Mammary epithelial cell (primary cell): ENCODE measurements at regions of chr19 and their contacts with region 1.

Region 1: DNA sequence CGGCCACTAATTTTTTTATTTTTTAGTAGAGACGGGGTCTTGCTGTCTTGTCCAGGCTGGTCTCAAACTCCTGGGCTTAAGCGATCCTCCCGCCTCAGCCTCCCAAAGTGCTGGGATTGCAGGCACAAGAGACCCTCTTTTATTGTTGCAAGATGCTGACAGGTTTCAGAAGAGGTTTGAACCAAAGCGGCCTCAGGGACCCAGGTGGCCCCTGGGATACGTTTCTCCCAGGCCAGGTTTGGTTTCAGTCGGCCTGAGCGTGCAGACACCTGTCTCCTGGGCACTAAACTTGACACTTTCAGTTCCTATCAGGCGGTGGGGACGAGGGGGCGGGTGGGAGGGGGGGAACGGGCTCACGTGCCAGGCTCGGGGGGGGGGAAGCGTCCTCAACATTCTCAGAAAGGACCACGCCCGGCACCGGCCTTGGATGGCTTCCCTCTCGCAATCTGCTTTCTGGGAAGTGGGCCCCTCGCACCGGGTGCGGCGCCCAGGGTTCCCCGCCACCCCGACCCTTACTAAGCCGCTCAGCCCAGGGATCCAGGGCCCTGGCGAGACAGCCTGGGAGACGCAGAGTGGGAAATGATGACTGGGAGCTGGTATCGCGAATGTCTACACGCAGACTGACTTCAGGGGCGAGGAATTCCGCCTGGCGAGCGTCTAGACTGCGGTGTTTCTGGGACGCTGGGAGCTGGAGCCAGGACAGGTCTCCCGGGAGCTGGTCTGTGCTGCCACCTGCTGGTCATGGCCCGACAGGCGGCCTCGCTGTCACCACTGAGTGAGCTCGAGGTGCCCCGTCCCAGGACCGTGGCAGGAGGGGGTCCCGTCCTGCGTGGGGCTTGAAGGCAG is 91.6 kb downstream of the GNG7 start:
- DNase-seq: peak; percentile 72
- H3K4me3 ChIP-seq: peak overlapping the region in 2 of 3 experiments; percentile 35 to 41
- H3K27ac ChIP-seq: no peak overlapping the region
- H3K4me1 ChIP-seq: peaks cover 6% of the 10 kb centered on the region
- H3K27me3 ChIP-seq: no peaks in the 10 kb centered on the region
- CTCF ChIP-seq: peak; percentile 84 to 99

Region 2: DNA sequence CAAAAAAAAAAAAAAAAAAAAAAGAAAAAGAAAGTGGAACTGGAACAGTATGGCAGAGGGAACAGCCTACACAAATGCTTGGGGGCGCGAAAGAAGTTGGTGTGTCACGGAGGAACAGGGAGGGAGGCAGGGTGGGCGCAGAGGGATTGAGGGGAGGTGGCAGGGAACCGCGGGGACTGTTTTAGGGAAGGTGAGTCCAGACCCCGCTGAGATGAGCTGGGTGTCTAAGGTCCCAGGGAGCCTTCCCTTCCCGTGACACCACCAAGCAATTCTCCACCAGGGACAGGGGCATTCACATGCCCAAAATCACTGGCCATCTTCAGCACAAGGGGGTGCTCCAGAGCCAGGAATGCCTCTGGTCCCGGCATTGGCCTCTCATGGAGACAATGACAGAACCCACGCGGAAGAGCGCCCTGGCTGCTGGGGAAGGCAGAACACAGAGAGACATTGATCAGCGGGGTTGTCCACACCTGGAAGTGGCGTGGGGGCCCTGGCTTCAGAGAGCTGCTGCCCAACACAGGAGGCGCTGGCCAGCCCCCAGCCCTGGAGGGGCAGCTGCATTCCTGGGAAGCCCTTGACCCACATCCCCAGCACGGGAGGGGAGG is 335.8 kb before region 1 on chr19:
- CTCF ChIA-PET with region 1: no interaction called
- dilution Hi-C with region 1: no loop called
- in situ Hi-C with region 1: no loop called
- intact Hi-C with region 1: loop called (anchors 1 kb)
- DNase-seq: peak; percentile 44
- H3K4me3 ChIP-seq: no peak overlapping the region
- H3K27ac ChIP-seq: no peak overlapping the region
- H3K4me1 ChIP-seq: peaks cover 24% of the 10 kb centered on the region
- H3K27me3 ChIP-seq: no peaks in the 10 kb centered on the region
- CTCF ChIP-seq: peak; percentile 44 to 62

Region 3: GRCh38 chr19:2475702-2476450 is 135.0 kb before region 1 on chr19 and contains the start of gene GADD45B:
- CTCF ChIA-PET with region 1: interaction called, 8 read pairs
- dilution Hi-C with region 1: loop called (anchors 5 kb)
- in situ Hi-C with region 1: loop called (anchors 5 to 10 kb)
- intact Hi-C with region 1: loop called (anchors 1 kb)
- DNase-seq: peak; percentile 95
- H3K4me3 ChIP-seq: peak within 1 kb of the TSS; percentile 84 to 98 (median 94)
- H3K27ac ChIP-seq: peak within 1 kb of the TSS; percentile 77
- H3K4me1 ChIP-seq: peaks cover 23% of the 10 kb centered on the region
- H3K27me3 ChIP-seq: no peaks in the 10 kb centered on the region
- CTCF ChIP-seq: no peak
- total RNA-seq, gene GADD45B: 18.0 to 83.9 TPM

Region 4: GRCh38 chr19:2554856-2555255 is 56.0 kb before region 1 on chr19:
- CTCF ChIA-PET with region 1: no interaction called
- dilution Hi-C with region 1: loop called (anchors 5 kb)
- in situ Hi-C with region 1: no loop called
- intact Hi-C with region 1: no loop called
- DNase-seq: no peak
- H3K4me3 ChIP-seq: no peak overlapping the region
- H3K27ac ChIP-seq: no peak overlapping the region
- H3K4me1 ChIP-seq: peaks cover 3% of the 10 kb centered on the region
- H3K27me3 ChIP-seq: no peaks in the 10 kb centered on the region
- CTCF ChIP-seq: no peak

Region 5: GRCh38 chr19:2594319-2594718 is 16.5 kb before region 1 on chr19:
- CTCF ChIA-PET with region 1: interaction called, 23 read pairs
- dilution Hi-C with region 1: no loop called
- in situ Hi-C with region 1: no loop called
- intact Hi-C with region 1: no loop called
- DNase-seq: no peak
- H3K4me3 ChIP-seq: no peak overlapping the region
- H3K27ac ChIP-seq: no peak overlapping the region
- H3K4me1 ChIP-seq: peaks cover 5% of the 10 kb centered on the region
- H3K27me3 ChIP-seq: peaks cover 2% of the 10 kb centered on the region
- CTCF ChIP-seq: no peak